ENCODE measurements at regions of chr10 and their contacts with region 1.

Region 1: GRCh38 chr10:22133749-22134624 is 83.8 kb downstream of the EBLN1 start:
- DNase-seq: peak; percentile 26 to 83 (median 58)
- ATAC-seq: peak; percentile 92
- H3K4me3 ChIP-seq: no peak overlapping the region
- H3K27ac ChIP-seq: peak overlapping the region; percentile 69
- H3K4me1 ChIP-seq: peaks cover 17 to 23% of the 10 kb centered on the region in 2 experiments
- H3K27me3 ChIP-seq: no peaks in the 10 kb centered on the region
- CTCF ChIP-seq: peak in 1 of 3 experiments; percentile 19; a peak in 2 of 6 replicates
- EP300 ChIP-seq: peak; percentile 70
- POLR2A ChIP-seq: no peak
- RAD21 ChIP-seq: peak; percentile 29 to 37

Region 2: GRCh38 chr10:22003079-22003913 is 130.7 kb before region 1 on chr10 and contains the start of gene DNAJC1:
- CTCF ChIA-PET with region 1: no interaction called
- POLR2A ChIA-PET with region 1: no interaction called
- in situ Hi-C with region 1: no loop called
- intact Hi-C with region 1: loop called (anchors 5 kb)
- DNase-seq: peak; percentile 96 to 98 (median 97)
- ATAC-seq: peak; percentile 96
- H3K4me3 ChIP-seq: peak within 1 kb of the TSS; percentile 85
- H3K27ac ChIP-seq: peak within 1 kb of the TSS; percentile 87
- H3K4me1 ChIP-seq: peaks cover 8 to 21% of the 10 kb centered on the region in 2 experiments
- H3K27me3 ChIP-seq: no peaks in the 10 kb centered on the region
- CTCF ChIP-seq: no peak; a peak in 1 of 6 replicates
- EP300 ChIP-seq: no peak
- POLR2A ChIP-seq: peak; percentile 74
- RAD21 ChIP-seq: peak in 1 of 2 experiments; percentile 12; a peak in 2 of 4 replicates
- polyA plus RNA-seq, gene DNAJC1: 5.4 to 6.5 TPM

Region 3: DNA sequence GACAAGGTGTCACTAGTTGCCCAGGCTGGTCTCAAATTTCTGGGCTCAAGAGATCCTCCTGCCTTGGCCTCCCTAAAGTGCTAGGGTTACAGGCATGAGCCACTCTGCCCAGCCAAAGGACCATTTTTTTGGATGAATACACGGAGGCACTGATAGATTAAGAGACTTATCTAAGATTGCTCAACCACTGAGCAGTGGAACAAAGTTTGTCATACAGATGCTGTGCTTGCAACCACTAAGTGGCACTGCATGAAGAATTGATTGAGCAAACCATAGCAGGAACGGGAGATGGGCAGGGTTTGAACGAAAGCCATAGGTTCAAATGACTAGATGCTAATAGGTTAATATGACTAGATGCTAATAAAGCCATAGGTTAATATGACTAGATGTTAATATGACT is 22.8 kb after region 1 on chr10:
- CTCF ChIA-PET with region 1: no interaction called
- POLR2A ChIA-PET with region 1: no interaction called
- in situ Hi-C with region 1: no loop called
- intact Hi-C with region 1: no loop called
- DNase-seq: no peak
- ATAC-seq: no peak
- H3K4me3 ChIP-seq: no peak overlapping the region
- H3K27ac ChIP-seq: no peak overlapping the region
- H3K4me1 ChIP-seq: peaks cover 5 to 20% of the 10 kb centered on the region in 2 experiments; a peak in 3 of 5 replicates
- H3K27me3 ChIP-seq: no peaks in the 10 kb centered on the region
- CTCF ChIP-seq: no peak
- EP300 ChIP-seq: no peak
- POLR2A ChIP-seq: no peak
- RAD21 ChIP-seq: no peak

Region 4: DNA sequence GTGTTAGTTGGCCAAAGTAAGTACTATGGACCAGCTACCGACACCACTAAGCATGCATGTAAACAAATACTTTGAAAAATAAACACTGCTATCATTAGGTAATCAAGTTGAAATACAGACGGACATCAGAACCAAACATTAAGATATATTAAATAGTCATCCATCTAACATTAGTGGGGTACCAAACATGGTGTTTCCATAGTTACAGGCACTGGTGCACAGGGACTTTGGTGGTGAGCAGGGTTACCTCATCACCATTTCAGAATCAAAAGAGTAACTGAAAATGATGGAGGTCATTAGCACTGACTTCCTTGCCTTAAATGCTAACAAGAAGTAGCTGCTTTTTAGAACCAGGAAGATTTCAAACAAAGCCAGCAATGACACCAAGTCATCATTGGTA is 60.0 kb after region 1 on chr10:
- CTCF ChIA-PET with region 1: no interaction called
- POLR2A ChIA-PET with region 1: no interaction called
- in situ Hi-C with region 1: no loop called
- intact Hi-C with region 1: no loop called
- DNase-seq: no peak
- ATAC-seq: no peak
- H3K4me3 ChIP-seq: no peak overlapping the region
- H3K27ac ChIP-seq: no peak overlapping the region
- H3K4me1 ChIP-seq: no peaks in the 10 kb centered on the region
- H3K27me3 ChIP-seq: no peaks in the 10 kb centered on the region
- CTCF ChIP-seq: no peak
- EP300 ChIP-seq: no peak
- POLR2A ChIP-seq: no peak
- RAD21 ChIP-seq: no peak

Measured in K562 (cell line).